Pancreas (tissue), 10 donors: ENCODE measurements at regions of chr11 and their contacts with region 1.

Region 1: DNA sequence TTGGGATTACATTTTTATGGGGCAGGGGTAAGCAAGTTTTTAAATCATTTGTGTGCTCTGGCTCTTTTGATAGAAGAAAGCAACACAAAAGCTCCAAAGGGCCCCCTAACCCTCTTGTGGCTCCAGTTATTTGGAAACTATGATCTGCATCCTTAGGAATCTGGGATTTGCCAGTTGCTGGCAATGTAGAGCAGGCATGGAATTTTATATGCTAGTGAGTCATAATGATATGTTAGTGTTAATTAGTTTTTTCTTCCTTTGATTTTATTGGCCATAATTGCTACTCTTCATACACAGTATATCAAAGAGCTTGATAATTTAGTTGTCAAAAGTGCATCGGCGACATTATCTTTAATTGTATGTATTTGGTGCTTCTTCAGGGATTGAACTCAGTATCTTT is 10.1 kb downstream of the RAG1 start:
- DNase-seq: no peak
- ATAC-seq: no peak
- H3K4me3 ChIP-seq: no peak overlapping the region
- H3K27ac ChIP-seq: no peak overlapping the region
- H3K4me1 ChIP-seq: no peaks in the 10 kb centered on the region
- H3K27me3 ChIP-seq: no peaks in the 10 kb centered on the region
- CTCF ChIP-seq: no peak

Region 2: DNA sequence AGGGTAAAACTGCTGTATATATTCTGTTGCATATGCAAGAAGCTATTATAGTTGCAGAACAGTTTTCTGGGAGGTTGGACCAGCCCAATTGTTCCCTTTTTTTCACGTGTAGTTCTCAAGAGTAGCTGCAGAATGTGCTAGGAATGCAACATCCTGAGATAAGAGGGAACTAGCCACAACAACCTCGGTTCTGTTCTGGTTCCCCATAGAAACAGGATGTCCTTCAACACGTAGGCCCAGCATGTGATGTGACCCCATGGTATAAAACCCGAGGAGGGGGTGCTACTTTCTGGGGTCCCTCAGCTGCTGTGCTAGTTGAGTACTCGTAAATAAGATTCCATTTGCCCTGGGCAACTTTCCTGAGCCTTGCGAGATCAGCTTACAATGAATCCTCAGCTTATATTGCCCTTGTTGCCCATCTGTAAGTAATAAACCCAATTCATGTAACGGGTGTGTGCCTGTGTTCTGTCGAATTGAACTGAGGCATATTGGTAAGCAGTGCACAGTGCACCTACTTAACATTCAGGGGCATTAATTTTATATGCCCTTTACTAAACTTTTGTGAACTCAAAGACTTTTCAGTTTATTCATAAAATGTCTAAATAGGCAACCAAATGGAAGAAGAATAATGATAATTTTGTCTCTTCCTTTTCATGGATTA is 44.8 kb before region 1 on chr11:
- intact Hi-C with region 1: no loop called
- DNase-seq: no peak
- ATAC-seq: no peak
- H3K4me3 ChIP-seq: no peak overlapping the region
- H3K27ac ChIP-seq: no peak overlapping the region
- H3K4me1 ChIP-seq: no peaks in the 10 kb centered on the region
- H3K27me3 ChIP-seq: no peaks in the 10 kb centered on the region
- CTCF ChIP-seq: no peak

Region 3: DNA sequence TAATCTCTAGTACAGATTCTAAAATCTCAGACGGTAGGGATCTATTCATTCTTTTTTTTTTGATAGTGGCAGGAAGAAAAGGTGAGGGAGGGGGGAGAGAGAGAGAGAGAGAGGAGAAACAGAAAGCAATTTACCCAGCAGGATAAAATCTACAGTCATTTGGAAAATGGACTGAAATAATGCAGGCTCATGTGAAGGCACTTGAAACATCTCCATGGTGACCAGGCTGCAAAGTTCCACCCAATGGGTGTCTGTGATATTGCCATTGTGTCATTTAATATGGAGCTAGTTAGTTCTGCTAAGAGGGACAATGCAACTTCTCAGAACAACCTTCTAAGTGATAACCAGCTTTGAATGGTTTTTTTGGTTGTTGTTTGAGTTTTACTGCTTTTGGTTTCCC is 185.3 kb after region 1 on chr11:
- intact Hi-C with region 1: loop called in 1 of 3 experiments (anchors 10 kb)
- DNase-seq: no peak
- ATAC-seq: no peak
- H3K4me3 ChIP-seq: no peak overlapping the region
- H3K27ac ChIP-seq: no peak overlapping the region
- H3K4me1 ChIP-seq: no peaks in the 10 kb centered on the region
- H3K27me3 ChIP-seq: no peaks in the 10 kb centered on the region
- CTCF ChIP-seq: no peak